Left ventricle myocardium superior (tissue), 1 donor: ENCODE measurements at regions of chr7 and their contacts with region 1.

Region 1: GRCh38 chr7:95861041-95861440 is 88.7 kb downstream of the DYNC1I1 start:
- DNase-seq: no peak
- ATAC-seq: no peak

Region 2: GRCh38 chr7:95481556-95482162 is 379.4 kb before region 1 on chr7:
- intact Hi-C with region 1: no loop called
- DNase-seq: no peak
- ATAC-seq: no peak

Region 3: GRCh38 chr7:95808396-95808795 is 52.6 kb before region 1 on chr7:
- intact Hi-C with region 1: loop called (anchors 2 kb)
- DNase-seq: no peak
- ATAC-seq: no peak

Region 4: GRCh38 chr7:95899919-95900513 is 39.0 kb after region 1 on chr7:
- intact Hi-C with region 1: no loop called
- DNase-seq: no peak
- ATAC-seq: no peak